ENCODE measurements at regions of chr6 and their contacts with region 1.

Region 1: DNA sequence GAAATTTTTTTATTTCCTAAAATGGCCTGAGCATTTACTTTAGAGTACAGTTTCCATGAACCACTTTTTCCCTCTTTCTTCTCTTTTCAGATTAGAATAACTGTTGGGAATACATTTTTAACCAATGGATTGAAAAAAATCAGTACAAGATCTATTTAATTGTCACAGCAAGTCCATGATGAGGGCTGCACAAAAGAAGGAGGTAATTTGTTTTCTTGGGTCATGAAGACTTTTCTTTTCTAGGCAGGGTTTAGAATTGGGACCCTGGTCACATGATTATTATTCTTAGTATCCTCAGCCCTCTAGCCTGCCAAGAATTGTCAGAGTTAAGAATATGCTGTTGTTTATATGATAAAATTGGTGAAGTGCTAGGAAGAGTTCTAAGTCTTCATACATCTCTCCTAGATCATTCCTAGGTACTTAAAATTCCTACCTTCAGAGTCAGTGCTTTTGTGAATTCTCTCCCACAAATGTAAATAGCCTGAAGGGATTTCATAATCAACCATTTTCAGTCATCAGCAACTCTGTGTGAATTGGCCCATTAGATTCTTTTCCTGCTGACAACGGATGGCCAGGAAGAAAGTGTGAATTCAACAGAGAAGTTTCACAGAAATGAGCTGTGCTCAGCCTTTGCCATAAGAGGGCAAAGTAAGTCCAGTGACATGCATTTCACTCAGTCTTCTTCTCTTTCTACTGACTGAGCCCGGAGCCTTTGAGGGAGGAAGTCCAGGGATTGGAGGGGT is 32.4 kb upstream of the TPBG start:
- DNase-seq: peak; percentile 79
- ATAC-seq: peak; percentile 90
- H3K4me3 ChIP-seq: no peak overlapping the region
- H3K27ac ChIP-seq: no peak overlapping the region
- H3K4me1 ChIP-seq: peaks cover 14% of the 10 kb centered on the region
- H3K27me3 ChIP-seq: no peaks in the 10 kb centered on the region
- CTCF ChIP-seq: peak; percentile 55

Region 2: DNA sequence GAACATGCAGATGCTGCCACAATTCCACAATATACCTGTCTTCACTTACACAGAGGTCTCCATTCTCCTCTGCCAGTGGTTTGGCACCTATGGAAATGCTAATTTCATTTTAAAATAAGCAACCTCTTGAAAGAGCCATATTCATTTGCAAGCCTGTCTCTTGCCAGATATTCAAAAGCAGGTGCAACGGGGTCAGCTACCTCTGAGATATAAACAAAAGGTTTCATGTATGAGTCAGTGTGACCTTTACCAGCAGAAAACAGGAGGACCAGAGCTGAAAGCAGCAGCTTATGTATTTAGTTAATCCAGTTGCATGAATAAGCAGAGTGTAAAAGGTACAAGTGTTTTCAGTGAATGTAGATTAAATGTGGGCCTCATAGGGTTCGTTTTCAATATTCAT is 634.7 kb before region 1 on chr6:
- CTCF ChIA-PET with region 1: no interaction called
- POLR2A ChIA-PET with region 1: no interaction called
- intact Hi-C with region 1: no loop called
- DNase-seq: peak; percentile 51
- ATAC-seq: peak; percentile 37
- H3K4me3 ChIP-seq: no peak overlapping the region
- H3K27ac ChIP-seq: no peak overlapping the region
- H3K4me1 ChIP-seq: peaks cover 15% of the 10 kb centered on the region
- H3K27me3 ChIP-seq: no peaks in the 10 kb centered on the region
- CTCF ChIP-seq: no peak

Region 3: DNA sequence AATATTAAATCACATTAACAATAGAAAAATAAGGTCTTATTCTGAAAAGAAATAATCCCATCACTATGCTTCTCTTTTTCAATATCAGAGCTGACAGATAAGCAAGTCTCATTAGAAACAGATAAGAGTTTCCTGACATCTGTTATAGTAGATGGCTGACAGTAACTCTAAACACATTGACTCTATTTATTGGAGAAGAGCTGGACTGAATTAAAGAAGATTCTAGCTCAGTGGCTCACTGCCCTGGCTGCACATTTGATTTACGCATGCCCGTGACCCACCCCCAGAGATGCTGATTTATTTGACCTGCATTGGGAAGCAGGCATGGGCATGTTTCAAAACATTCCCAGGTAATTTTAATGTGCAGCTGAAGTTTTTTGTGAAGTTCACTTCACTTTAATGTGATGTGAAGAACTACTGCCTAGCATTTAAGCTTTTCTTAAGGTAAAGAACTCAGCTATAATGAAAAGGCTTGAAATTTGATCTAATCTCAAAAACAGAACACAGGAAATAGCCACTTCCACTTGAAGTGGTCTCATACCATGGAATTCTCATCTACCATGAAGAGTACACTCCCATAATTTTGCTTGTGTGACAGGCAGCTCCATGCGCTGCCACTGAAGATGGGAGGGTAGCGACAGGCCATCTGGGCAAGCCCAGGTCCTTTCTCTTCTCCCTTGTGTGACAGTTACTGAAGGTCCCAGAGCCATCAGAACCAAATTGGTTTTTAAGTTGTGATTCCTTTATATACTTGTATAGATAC is 194.8 kb after region 1 on chr6:
- CTCF ChIA-PET with region 1: no interaction called
- POLR2A ChIA-PET with region 1: no interaction called
- intact Hi-C with region 1: loop called (anchors 10 kb)
- DNase-seq: no peak
- ATAC-seq: no peak
- H3K4me3 ChIP-seq: no peak overlapping the region
- H3K27ac ChIP-seq: no peak overlapping the region
- H3K4me1 ChIP-seq: no peaks in the 10 kb centered on the region
- H3K27me3 ChIP-seq: no peaks in the 10 kb centered on the region
- CTCF ChIP-seq: no peak

Region 4: GRCh38 chr6:82589509-82590206 is 258.5 kb after region 1 on chr6:
- CTCF ChIA-PET with region 1: no interaction called
- POLR2A ChIA-PET with region 1: no interaction called
- intact Hi-C with region 1: loop called (anchors 2 kb)
- DNase-seq: peak; percentile 94
- ATAC-seq: peak; percentile 91
- H3K4me3 ChIP-seq: no peak overlapping the region
- H3K27ac ChIP-seq: peak overlapping the region; percentile 96
- H3K4me1 ChIP-seq: peaks cover 26% of the 10 kb centered on the region
- H3K27me3 ChIP-seq: no peaks in the 10 kb centered on the region
- CTCF ChIP-seq: peak; percentile 70